Activated T-helper 1 cell treated with anti-CD3 and anti-CD28 coated beads, Interleukin-12 subunit alpha, Interleukin-12 subunit beta, Interleukin-2, Interleukin-4 antibody, amounts not matched to agents 30 ng/mL and 10 ng/mL and 1 ng/mL, durations not matched to agents 14 hours and 24 hours and 36 hours (primary cell): ENCODE measurements at regions of chr11 and their contacts with region 1.

Region 1: GRCh38 chr11:67239783-67240575 is 26.3 kb upstream of the GRK2 start:
- DNase-seq: peak; percentile 96
- H3K4me3 Mint-ChIP-seq: peak overlapping the region; percentile 100
- H3K27ac Mint-ChIP-seq: peak overlapping the region; percentile 100
- H3K4me1 Mint-ChIP-seq: peaks cover 58% of the 10 kb centered on the region
- H3K27me3 Mint-ChIP-seq: no peaks in the 10 kb centered on the region

Region 2: DNA sequence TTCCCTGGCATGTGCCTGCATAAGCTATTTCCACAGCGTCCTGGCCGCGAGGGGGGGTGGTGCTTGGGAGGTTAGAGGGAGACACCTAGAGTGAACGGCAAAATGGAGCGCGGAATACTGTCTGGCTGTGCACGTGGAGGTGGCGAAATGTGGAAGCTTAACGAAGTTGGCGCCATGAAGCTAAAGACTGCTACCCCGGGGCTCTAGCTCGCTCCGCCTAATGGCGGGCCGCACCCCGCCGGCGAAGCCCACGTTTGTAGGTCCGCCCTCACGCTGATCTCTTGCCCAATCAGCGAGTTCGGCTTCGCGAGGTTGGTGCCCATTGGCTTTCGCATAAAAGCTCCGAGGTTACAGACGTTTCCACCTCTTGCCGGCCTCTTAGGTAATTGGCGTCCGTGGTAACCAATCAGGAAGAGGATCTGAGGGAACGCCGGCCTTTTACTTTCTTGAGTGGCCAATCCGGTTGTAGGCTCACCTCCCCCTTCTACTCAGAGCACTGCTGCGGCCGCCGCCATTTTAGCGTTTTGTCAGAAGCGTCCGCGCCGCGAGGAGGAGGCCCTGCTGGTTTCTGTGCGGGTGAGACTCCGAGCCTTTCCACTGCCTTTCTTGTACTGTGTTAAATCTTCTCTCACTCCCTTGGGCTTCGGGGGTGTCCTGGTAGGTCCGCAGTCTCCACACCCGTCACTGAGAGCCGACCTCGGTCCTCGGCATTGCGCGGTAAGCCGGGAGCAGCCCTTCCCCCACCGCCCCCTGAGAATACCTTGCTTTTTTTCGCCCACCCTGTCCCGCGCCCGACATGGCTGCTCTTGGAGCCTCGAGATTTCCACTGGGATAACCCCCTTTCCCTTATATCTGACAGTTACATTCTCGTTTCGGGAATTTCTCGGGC is 601.6 kb before region 1 on chr11 and contains the start of gene RBM4:
- intact Hi-C with region 1: loop called (anchors 5 kb)
- DNase-seq: peak; percentile 97
- H3K4me3 Mint-ChIP-seq: peak within 1 kb of the TSS; percentile 96
- H3K27ac Mint-ChIP-seq: peak within 1 kb of the TSS; percentile 96
- H3K4me1 Mint-ChIP-seq: peaks cover 68% of the 10 kb centered on the region
- H3K27me3 Mint-ChIP-seq: no peaks in the 10 kb centered on the region
- total RNA-seq, gene RBM4: 131 and 133 TPM in 2 replicates

Region 3: DNA sequence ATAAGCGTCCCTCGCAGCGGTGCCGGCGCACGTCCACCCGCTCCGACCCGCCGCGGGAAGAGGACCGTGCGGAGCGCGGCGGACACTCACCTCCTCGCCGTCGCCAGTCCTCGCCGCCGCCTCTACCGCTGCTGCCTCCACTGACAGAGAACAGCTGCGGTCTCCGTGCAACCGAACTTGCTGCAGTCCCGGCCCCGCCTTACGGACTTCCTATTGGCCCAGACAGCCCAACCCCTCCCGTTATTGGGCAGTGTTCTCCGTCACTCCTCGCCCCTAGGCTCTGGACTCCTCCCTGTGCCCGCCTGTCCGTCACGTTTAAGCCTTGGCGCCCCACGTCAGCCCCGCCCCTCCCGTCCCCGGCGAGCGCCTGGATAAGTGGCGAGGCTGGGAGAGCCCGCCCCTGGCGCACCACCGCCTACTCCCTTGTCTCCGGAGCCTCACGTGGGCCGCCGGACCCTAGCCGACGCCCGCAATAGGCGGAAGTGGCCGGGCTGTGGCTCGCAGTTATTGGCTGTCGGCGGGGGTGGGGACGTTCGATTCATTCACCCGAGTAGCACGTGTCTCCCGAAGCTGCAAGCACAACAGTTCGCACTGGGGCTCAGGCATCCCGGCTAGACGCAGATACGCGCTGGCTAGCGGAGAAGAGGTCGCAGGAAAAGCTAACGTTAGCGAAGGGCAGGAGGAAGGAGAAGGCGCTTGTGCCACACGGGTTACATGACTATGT is 281.6 kb before region 1 on chr11 and contains the start of gene PC:
- intact Hi-C with region 1: loop called (anchors 1 kb)
- DNase-seq: peak; percentile 97
- H3K4me3 Mint-ChIP-seq: peak within 1 kb of the TSS; percentile 83
- H3K27ac Mint-ChIP-seq: peak within 1 kb of the TSS; percentile 90
- H3K4me1 Mint-ChIP-seq: peaks cover 29% of the 10 kb centered on the region
- H3K27me3 Mint-ChIP-seq: peaks cover 16% of the 10 kb centered on the region
- total RNA-seq, gene PC: 11.2 and 15.9 TPM in 2 replicates

Region 4: DNA sequence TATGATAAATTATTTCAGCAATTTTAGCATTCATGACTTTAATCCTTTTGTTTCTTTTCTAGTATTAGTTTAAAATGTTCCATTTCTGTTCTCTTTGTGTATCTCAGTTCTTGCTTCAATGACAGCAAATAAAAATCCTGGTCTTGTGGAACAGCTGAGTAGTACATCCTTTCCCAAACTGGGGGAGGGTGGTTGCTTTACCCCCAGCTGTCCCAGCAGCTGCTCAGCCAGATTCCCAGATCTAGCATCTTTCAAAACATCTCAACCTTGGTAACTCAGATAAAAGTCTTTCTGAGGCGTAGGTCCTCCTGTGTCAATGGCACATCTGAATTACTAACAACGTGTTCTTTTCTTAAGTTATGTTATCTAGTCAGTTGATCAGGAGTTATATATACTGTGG is 45.9 kb before region 1 on chr11:
- intact Hi-C with region 1: loop called (anchors 5 kb)
- DNase-seq: no peak
- H3K4me3 Mint-ChIP-seq: no peak overlapping the region
- H3K27ac Mint-ChIP-seq: no peak overlapping the region
- H3K4me1 Mint-ChIP-seq: peaks cover 8% of the 10 kb centered on the region
- H3K27me3 Mint-ChIP-seq: no peaks in the 10 kb centered on the region

Region 5: DNA sequence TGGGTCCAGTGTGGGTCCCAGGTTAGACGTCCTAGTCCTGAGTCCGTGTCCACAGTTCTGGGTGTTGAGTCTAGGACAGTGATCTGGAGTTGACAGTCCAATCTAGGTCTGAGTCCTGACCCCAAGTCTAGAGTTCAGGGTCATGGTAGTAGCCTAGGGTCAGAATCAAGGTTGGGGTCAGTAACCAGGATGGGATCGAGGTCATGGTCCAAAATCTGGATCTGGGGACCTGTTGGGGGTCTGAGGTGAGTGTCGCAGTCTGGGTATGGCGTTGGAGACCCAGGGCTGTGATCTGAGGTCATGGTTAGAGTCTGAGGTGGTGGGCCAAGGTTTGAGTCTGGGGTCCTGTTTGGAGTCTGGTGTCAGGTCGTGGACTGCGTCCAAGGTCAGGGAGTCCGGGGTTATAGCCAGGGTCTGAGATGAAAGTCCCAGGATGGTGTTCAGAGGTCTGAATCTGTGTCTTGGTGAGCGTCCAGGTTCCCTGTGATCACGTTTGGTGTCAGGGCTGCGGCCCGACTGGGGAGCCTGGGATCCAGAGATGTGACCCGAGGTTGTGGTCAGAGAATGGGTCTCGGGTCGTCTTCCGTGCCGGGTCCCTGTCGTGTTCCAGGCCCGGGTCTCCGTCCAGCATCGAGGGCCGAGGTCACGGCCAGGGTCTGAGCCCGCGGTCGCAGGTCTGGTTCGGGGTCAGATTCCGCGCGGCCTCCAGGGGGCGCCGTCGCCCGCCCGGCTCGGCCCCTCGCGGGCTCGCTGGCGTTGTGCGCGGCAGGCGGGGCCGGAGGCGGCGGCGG is 25.8 kb after region 1 on chr11:
- intact Hi-C with region 1: loop called (anchors 1 kb)
- DNase-seq: peak; percentile 76
- H3K4me3 Mint-ChIP-seq: peak overlapping the region; percentile 83
- H3K27ac Mint-ChIP-seq: peak overlapping the region; percentile 90
- H3K4me1 Mint-ChIP-seq: peaks cover 73% of the 10 kb centered on the region
- H3K27me3 Mint-ChIP-seq: no peaks in the 10 kb centered on the region

Region 6: GRCh38 chr11:67317205-67317887 is 77.4 kb after region 1 on chr11:
- intact Hi-C with region 1: loop called (anchors 1 kb)
- DNase-seq: peak; percentile 98
- H3K4me3 Mint-ChIP-seq: peak overlapping the region; percentile 94
- H3K27ac Mint-ChIP-seq: peak overlapping the region; percentile 100
- H3K4me1 Mint-ChIP-seq: peaks cover 39% of the 10 kb centered on the region
- H3K27me3 Mint-ChIP-seq: peaks cover 4% of the 10 kb centered on the region

Region 7: DNA sequence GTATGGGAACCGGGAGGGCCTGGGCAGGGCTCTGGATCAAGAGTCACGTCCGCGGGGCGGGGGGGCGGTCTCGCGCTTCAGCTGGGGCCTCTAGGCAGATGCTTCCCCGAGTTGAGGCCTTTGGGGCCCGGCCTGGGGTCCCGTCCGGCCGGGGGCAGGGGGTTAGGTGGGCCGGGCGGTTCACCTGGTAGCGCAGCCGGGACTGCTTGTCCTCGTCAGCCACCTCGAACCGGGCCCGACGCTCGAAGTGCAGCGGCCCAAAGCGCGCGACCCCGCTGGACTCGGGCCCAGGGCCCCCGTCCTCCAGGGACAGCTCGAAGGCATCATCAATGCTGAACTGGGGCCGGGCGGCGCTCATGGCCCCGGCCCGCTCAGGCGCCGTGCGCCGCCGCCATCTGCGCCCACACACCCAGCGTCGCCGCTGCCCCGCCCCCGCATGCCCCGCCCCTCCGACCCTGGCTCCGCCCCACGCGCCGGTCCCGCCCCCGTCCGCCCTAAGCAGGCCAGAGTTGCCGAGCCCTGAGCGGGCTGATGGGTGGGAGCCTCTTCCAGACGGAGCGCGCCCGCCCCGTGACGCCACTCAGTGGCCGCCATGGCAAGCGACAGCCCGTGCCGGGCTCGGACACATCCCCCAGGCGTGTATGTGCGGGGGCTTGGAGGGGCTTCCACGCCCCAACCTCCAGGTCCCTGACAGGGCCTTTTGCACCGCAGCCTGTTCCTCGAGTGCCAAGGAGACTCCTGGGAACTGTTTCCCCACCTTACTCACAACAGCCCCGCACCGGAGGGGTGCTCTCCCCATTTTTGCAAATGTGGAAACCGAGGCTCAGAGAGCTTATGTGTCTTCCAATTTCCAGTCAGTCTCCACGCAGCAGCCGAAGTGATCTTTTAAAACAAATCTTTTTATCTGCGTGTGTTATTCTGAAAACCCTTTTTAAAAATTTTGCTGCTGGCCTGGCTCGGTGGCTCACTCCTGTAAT is 229.1 kb after region 1 on chr11 and contains the start of gene TMEM134:
- intact Hi-C with region 1: loop called (anchors 1 kb)
- DNase-seq: peak; percentile 88
- H3K4me3 Mint-ChIP-seq: peak within 1 kb of the TSS; percentile 91
- H3K27ac Mint-ChIP-seq: peak within 1 kb of the TSS; percentile 84
- H3K4me1 Mint-ChIP-seq: peaks cover 21% of the 10 kb centered on the region
- H3K27me3 Mint-ChIP-seq: no peaks in the 10 kb centered on the region
- total RNA-seq, gene TMEM134: 55.1 and 61.4 TPM in 2 replicates

Region 8: GRCh38 chr11:68003846-68004550 is 764.0 kb after region 1 on chr11 and contains the start of gene UNC93B1:
- intact Hi-C with region 1: no loop called
- DNase-seq: peak; percentile 81
- H3K4me3 Mint-ChIP-seq: peak within 1 kb of the TSS; percentile 85
- H3K27ac Mint-ChIP-seq: peak within 1 kb of the TSS; percentile 82
- H3K4me1 Mint-ChIP-seq: peaks cover 27% of the 10 kb centered on the region
- H3K27me3 Mint-ChIP-seq: no peaks in the 10 kb centered on the region
- total RNA-seq, gene UNC93B1: 13.9 and 14.8 TPM in 2 replicates